ENCODE measurements at regions of chr14 and their contacts with region 1.

Region 1: GRCh38 chr14:59126710-59127432 is 61.6 kb upstream of the DAAM1 start:
- DNase-seq: peak; percentile 26
- H3K4me3 Mint-ChIP-seq: no peak overlapping the region
- H3K27ac Mint-ChIP-seq: no peak overlapping the region
- H3K4me1 Mint-ChIP-seq: no peaks in the 10 kb centered on the region
- H3K27me3 Mint-ChIP-seq: no peaks in the 10 kb centered on the region
- CTCF ChIP-seq: peak; percentile 36

Region 2: DNA sequence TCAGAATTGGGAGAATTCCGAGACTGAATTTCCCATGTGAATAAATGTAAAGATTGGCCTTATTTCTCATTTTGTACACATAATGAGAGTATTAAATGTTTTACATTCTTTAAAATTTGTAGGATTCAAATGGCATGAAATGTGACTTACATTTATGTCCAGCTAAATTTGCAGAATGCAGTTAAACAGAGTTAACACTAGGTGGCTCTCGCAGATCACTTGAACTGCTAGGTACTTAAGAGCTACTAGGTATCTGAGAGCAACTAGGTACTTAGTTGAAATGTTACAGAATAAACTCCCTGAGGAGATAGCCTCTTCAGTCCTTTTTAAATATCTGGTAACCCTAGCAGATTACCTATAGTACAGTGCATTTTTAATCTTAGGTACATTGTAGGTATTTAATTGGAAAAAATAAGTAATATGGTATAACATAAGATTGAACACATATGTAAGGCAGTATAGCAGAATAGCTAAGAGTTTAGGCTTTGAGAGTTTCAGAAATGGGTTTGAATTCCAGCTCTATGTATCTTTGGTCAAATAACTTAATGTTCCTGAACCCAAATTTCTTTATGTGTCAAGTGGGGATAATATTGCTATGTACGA is 625.6 kb before region 1 on chr14:
- CTCF ChIA-PET with region 1: no interaction called
- intact Hi-C with region 1: loop called (anchors 1 kb)
- DNase-seq: peak; percentile 16
- H3K4me3 Mint-ChIP-seq: no peak overlapping the region
- H3K27ac Mint-ChIP-seq: no peak overlapping the region
- H3K4me1 Mint-ChIP-seq: no peaks in the 10 kb centered on the region
- H3K27me3 Mint-ChIP-seq: no peaks in the 10 kb centered on the region
- CTCF ChIP-seq: peak; percentile 62

Region 3: GRCh38 chr14:59028476-59029202 is 98.2 kb before region 1 on chr14:
- CTCF ChIA-PET with region 1: interaction called, 5 read pairs
- intact Hi-C with region 1: loop called (anchors 1 kb)
- DNase-seq: peak; percentile 68
- H3K4me3 Mint-ChIP-seq: no peak overlapping the region
- H3K27ac Mint-ChIP-seq: no peak overlapping the region
- H3K4me1 Mint-ChIP-seq: peaks cover 8% of the 10 kb centered on the region
- H3K27me3 Mint-ChIP-seq: no peaks in the 10 kb centered on the region
- CTCF ChIP-seq: peak; percentile 59

Region 4: GRCh38 chr14:59294662-59294992 is 167.8 kb after region 1 on chr14:
- CTCF ChIA-PET with region 1: no interaction called
- intact Hi-C with region 1: no loop called
- DNase-seq: no peak
- H3K4me3 Mint-ChIP-seq: no peak overlapping the region
- H3K27ac Mint-ChIP-seq: no peak overlapping the region
- H3K4me1 Mint-ChIP-seq: peaks cover 23% of the 10 kb centered on the region
- H3K27me3 Mint-ChIP-seq: no peaks in the 10 kb centered on the region
- CTCF ChIP-seq: no peak

Region 5: GRCh38 chr14:59333668-59334067 is 206.8 kb after region 1 on chr14:
- CTCF ChIA-PET with region 1: no interaction called
- intact Hi-C with region 1: loop called (anchors 5 kb)
- DNase-seq: no peak
- H3K4me3 Mint-ChIP-seq: no peak overlapping the region
- H3K27ac Mint-ChIP-seq: no peak overlapping the region
- H3K4me1 Mint-ChIP-seq: peaks cover 8% of the 10 kb centered on the region
- H3K27me3 Mint-ChIP-seq: no peaks in the 10 kb centered on the region
- CTCF ChIP-seq: no peak

Region 6: DNA sequence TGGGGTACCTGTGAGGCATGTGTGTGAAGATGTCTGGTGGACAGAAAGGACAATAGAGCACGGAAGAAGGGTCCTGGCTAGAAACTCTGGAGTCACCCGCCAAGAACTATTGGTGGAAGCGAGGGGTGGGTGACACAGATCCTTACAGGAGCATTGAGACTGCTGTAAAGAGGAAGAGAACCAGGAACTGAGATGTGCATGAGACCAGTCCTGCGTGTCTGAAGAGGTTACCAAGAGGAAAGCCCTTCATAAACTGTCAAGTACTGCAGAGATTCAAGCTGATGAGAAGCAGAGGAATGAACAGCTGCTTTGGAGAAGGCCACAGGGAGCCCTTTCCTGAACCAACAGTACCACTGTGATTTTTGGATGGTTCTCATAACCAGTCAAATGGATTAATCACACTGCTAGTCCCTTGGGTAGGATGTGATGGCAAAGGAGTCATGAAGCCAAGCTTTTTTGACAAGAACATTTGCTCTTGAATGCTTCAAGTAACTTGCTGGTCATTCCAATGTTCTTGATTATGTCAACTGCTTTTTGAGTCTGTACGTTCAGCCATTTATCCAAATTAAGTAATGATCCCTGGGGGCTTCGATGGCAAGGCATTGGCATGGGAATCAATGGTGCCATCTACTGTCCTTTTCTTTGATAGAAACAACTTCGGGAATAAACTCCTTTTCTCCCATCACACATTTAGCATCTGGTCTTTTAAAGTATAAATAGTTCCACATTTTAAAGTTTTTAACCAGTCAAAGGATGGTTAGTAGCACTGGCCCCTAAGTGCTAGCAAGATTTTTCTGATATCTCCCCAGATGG is 295.4 kb after region 1 on chr14:
- CTCF ChIA-PET with region 1: no interaction called
- intact Hi-C with region 1: loop called (anchors 2 kb)
- DNase-seq: no peak
- H3K4me3 Mint-ChIP-seq: no peak overlapping the region
- H3K27ac Mint-ChIP-seq: no peak overlapping the region
- H3K4me1 Mint-ChIP-seq: no peaks in the 10 kb centered on the region
- H3K27me3 Mint-ChIP-seq: no peaks in the 10 kb centered on the region
- CTCF ChIP-seq: no peak

Region 7: DNA sequence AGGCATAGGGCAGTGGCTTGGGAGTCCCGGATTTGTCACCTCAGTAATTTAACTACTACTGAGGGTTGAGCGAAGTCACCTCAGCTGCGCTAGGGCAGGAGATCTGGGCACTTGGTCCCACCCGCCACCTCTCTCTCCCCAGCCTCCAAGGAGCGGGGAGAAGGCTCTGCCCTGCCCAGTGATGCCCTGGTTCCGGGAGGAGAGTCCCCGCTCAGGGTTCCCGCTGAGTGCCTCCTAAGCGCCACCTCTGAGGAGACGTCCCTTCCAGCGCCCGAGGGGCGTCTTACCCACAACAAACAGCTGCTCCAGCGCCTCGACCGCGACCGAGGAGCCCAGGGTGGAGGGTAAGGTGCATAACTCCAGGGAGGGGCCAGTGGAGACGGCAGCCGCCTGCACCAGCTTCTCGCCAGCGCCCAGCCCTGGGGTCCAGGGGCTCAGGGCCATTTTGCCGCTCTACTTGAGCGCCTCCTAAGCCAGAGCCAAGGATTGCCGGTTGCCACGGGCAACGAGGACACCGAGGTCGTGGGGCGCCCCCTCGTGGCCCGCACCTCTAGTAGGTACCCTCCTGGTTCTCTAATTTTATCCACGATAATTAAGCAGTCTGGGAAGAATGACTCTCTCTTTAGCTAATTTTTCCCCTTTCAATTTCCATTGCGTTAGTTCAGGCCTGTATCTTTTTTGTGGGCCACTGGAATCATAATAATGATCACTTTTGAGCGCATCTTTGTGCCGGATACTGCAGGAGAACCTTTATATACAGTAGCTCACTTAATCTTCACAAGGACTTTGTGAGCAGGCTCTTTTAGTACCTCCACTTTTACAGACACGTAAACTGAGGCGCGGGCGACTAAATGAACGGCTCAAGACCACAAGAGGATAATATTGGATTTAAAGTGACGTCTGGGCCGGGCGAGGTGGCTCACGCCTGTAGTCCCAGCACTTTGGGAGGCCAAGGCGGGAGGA is 449.7 kb after region 1 on chr14 and contains the start of gene CCDC175:
- CTCF ChIA-PET with region 1: interaction called, 4 read pairs
- intact Hi-C with region 1: loop called (anchors 5 kb)
- DNase-seq: peak; percentile 92
- H3K4me3 Mint-ChIP-seq: peak within 1 kb of the TSS; percentile 80
- H3K27ac Mint-ChIP-seq: peak within 1 kb of the TSS; percentile 36
- H3K4me1 Mint-ChIP-seq: no peaks in the 10 kb centered on the region
- H3K27me3 Mint-ChIP-seq: no peaks in the 10 kb centered on the region
- CTCF ChIP-seq: peak; percentile 78
- total RNA-seq, gene CCDC175: not detected in 2 replicates